Activated CD4-positive, alpha-beta T cell treated with anti-CD3 and anti-CD28 coated beads for 36 hours (primary cell): ENCODE measurements at regions of chr6 and their contacts with region 1.

Region 1: DNA sequence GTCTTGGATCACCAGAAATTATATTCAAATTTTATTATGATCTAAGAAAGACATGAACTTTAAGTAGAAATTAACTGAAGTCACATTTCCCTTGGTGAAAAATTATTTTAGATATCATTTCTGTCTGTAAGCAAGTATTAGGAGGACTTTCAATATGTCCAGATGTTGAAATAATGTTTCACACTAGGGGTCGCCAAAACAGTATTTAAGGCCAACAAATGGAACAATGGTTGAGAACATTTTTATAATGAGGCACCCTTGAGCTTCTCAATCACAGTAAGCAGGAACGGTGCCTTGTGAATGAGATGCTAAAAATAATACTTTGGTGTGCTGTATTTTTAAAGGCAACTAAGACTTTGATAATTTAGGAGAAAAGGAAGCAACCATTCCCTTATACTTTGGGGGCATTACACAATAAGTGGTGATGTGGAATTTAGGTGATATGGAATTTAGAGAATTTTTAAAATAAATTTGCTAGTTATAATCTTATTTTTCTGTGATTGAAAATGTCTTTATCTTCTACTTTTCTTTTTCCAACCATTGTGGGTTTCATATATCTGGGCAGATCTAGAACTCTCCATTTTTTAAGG is 9.6 kb upstream of the SF3B5 start:
- DNase-seq: peak; percentile 30
- ATAC-seq: peak; percentile 78
- H3K4me3 Mint-ChIP-seq: no peak overlapping the region
- H3K27ac Mint-ChIP-seq: no peak overlapping the region
- H3K4me1 Mint-ChIP-seq: peaks cover 8% of the 10 kb centered on the region
- H3K27me3 Mint-ChIP-seq: no peaks in the 10 kb centered on the region

Region 2: DNA sequence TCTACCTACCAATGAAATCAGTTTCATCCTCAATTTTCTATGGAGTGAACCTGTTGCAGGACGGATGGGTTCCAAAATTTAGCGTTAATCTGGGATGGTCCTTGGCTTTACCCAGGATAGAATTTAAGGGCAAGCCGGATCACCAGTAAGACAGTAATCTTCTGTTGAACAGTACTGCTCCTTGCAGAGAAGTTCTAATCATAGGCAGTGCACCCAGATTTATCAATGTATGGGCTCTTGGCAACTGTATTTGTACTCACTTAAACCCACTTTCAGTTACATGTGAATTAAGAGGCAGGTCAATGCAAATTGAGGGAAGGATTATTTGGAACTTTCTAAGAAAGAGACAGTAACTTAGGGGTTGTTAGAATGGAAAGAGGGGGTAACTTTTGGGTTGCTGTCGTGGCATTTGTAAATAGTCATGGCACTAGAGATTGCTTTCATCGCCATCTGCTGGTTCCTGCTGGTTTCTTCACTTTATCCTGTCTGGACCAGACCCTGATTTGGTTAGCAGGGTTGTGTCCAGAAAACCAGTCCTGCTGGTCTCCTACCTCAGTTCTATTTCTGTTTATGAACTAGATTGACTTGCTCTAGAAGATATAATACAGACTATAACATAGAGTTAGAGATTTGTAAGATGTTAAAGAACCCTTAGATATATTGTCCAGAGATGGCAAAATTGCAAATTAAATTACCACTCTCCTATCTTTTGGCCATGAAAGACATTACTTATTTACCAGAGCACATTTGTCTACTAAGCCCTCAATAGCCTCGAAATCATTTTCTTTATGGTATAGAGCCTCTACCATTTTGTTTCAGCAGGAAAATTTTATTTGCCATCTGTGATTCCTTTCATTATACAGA is 826.4 kb after region 1 on chr6:
- CTCF ChIA-PET with region 1: no interaction called
- POLR2A ChIA-PET with region 1: no interaction called
- intact Hi-C with region 1: loop called in 1 of 2 experiments (anchors 10 kb)
- DNase-seq: peak; percentile 60
- ATAC-seq: peak; percentile 64
- H3K4me3 Mint-ChIP-seq: no peak overlapping the region
- H3K27ac Mint-ChIP-seq: no peak overlapping the region
- H3K4me1 Mint-ChIP-seq: no peaks in the 10 kb centered on the region
- H3K27me3 Mint-ChIP-seq: peaks cover 4% of the 10 kb centered on the region